ENCODE measurements at regions of chr6 and their contacts with region 1.

Region 1: DNA sequence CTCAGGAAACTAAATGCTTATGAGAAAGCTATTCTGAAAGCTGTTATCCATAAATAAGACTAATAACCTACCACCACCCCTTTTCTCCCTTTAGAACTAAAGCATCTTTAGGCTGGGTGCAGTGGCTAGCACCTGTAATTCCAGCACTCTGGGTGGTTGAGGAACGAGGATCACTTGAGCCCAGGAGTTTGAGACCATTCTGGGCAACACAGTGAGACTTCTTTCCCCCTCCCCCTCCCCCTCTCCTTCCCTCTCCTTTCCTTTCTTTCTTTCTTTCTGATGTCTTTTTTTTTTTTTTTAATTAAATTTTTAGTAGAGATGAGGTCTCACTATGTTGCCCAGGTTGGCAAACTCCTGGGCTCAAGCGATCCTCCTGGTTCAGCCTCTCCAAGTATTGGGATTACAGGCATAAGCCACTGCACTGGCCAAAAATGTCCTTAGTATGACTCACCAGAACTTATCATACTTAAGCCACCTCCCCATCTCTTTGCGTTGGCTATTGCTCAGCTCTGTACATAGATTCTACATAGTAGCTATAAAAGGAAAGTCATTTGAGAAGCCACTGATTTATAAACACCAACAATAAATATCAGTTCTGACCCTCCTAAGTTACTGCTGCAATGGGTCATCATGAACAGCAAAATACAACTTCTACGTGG is 54.8 kb upstream of the SPDEF start:
- DNase-seq: no peak
- ATAC-seq: peak; percentile 40 to 67 (median 47)
- H3K4me3 ChIP-seq: no peak overlapping the region
- H3K27ac ChIP-seq: peak overlapping the region; percentile 74
- H3K4me1 ChIP-seq: peaks cover 35% of the 10 kb centered on the region
- H3K27me3 ChIP-seq: no peaks in the 10 kb centered on the region
- CTCF ChIP-seq: no peak

Region 2: GRCh38 chr6:34459899-34460593 is 150.9 kb before region 1 on chr6:
- intact Hi-C with region 1: loop called (anchors 2 kb)
- DNase-seq: no peak
- ATAC-seq: peak; percentile 81 to 95 (median 90)
- H3K4me3 ChIP-seq: no peak overlapping the region
- H3K27ac ChIP-seq: no peak overlapping the region
- H3K4me1 ChIP-seq: no peaks in the 10 kb centered on the region
- H3K27me3 ChIP-seq: peaks cover 0 to 6% (median 0%) of the 10 kb centered on the region in 3 donors
- CTCF ChIP-seq: peak; percentile 81

Region 3: GRCh38 chr6:34526992-34527728 is 83.8 kb before region 1 on chr6:
- intact Hi-C with region 1: loop called (anchors 2 to 5 kb)
- DNase-seq: peak; percentile 96 to 98
- ATAC-seq: peak; percentile 92 to 95 (median 94)
- H3K4me3 ChIP-seq: peak overlapping the region; percentile 47
- H3K27ac ChIP-seq: peak overlapping the region; percentile 36
- H3K4me1 ChIP-seq: peaks cover 8% of the 10 kb centered on the region
- H3K27me3 ChIP-seq: no peaks in the 10 kb centered on the region
- CTCF ChIP-seq: peak; percentile 70

Measured in psoas muscle (tissue), 8 donors.